PC-3 (cell line): ENCODE measurements at regions of chr4 and their contacts with region 1.

Region 1: DNA sequence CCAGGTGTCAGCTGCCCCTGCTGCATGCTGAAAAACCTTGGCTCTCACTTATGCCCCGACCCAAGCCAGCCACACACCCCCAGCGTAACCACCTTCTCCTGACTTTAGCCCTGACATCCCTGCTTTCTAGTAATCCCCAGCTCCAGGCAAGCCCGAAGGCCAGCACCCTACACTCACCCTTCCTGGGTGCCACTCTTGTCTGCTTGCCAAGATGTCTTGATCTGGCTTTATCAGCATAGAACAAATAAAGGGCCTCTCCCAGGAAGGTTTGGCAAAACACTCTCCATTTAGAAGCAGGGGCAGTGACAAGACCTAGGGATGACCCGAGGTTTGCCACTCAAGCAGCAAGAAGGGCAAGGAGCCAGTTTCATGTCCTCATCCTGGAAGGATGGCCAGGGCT is 6.8 kb upstream of the MAP9 start:
- DNase-seq: peak; percentile 52
- ATAC-seq: peak; percentile 64
- H3K4me3 ChIP-seq: no peak overlapping the region
- H3K27ac ChIP-seq: no peak overlapping the region
- H3K4me1 ChIP-seq: peaks cover 6% of the 10 kb centered on the region
- H3K27me3 ChIP-seq: no peaks in the 10 kb centered on the region
- CTCF ChIP-seq: no peak

Region 2: DNA sequence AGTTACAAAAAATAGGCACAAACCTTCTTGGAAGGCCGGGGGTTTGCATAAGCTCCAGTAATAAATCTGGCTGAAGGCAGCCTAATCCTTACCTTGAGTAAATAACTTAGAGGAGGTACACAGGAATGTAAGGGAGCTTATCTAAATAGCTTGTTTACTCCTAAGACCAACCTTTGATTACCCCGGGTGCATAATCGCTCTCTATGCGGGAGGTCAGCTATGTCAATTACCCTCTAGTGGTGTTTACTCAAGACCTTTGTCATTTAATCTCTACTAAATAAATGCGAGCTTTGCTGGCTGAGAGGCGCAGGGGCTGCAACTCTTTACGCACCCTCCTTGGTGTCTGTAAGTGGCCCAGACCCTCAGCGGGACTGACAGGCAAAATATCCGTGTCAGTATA is 43.4 kb after region 1 on chr4:
- CTCF ChIA-PET with region 1: no interaction called
- POLR2A ChIA-PET with region 1: interaction called, 10 read pairs
- intact Hi-C with region 1: no loop called
- DNase-seq: no peak
- ATAC-seq: no peak
- H3K4me3 ChIP-seq: no peak overlapping the region
- H3K27ac ChIP-seq: no peak overlapping the region
- H3K4me1 ChIP-seq: peaks cover 12% of the 10 kb centered on the region
- H3K27me3 ChIP-seq: no peaks in the 10 kb centered on the region
- CTCF ChIP-seq: no peak